ENCODE measurements at regions of chr3 and their contacts with region 1.

Region 1: GRCh38 chr3:90091204-90091924 is 983.9 kb downstream of the EPHA3 start:
- DNase-seq: no peak
- ATAC-seq: peak; percentile 94
- H3K4me3 ChIP-seq: no peak overlapping the region
- H3K27ac ChIP-seq: no peak overlapping the region
- H3K4me1 ChIP-seq: no peaks in the 10 kb centered on the region
- H3K27me3 ChIP-seq: no peaks in the 10 kb centered on the region
- CTCF ChIP-seq: peak; percentile 22 to 49 (median 42); a peak in 4 of 6 replicates
- EP300 ChIP-seq: no peak
- POLR2A ChIP-seq: no peak
- RAD21 ChIP-seq: peak; percentile 60

Region 2: DNA sequence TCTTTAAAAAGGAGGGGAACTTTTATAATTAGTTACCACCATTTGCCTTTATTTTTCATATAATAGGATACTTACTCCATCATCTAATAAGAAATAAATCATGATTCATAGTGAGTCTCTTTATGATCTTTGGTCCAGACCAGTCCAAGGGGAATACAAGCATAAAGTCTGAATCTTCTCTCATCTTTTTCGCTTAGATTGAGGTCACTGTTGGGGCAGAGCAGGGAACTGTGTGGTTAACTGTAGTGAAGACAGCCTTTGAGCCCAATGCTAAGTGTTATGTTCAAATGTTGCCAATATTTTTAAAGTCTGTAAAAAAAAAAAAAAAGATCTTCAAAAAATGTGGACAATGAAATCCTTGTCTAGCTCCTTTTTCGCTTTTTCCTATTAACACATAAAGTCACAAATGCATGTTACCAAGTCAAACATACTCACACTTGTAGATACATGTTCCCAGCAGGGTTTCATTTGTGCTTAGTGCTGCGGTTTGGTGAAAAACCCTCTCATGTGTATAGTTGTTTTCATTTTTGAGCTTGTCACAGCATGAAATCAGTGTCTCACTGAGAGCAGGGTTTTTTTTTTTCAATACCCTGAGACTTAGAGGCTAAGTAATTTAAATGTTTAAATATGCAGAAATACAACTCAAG is 911.9 kb before region 1 on chr3:
- CTCF ChIA-PET with region 1: interaction called, 4 read pairs
- POLR2A ChIA-PET with region 1: no interaction called
- RAD21 ChIA-PET with region 1: interaction called, 14 read pairs
- SMC1A ChIA-PET with region 1: interaction called, 3 read pairs
- in situ Hi-C with region 1: no loop called
- intact Hi-C with region 1: no loop called
- DNase-seq: peak; percentile 16
- ATAC-seq: peak; percentile 93
- H3K4me3 ChIP-seq: no peak overlapping the region
- H3K27ac ChIP-seq: no peak overlapping the region
- H3K4me1 ChIP-seq: no peaks in the 10 kb centered on the region
- H3K27me3 ChIP-seq: no peaks in the 10 kb centered on the region
- CTCF ChIP-seq: no peak
- EP300 ChIP-seq: peak in 1 of 2 experiments; percentile 13; a peak in 1 of 4 replicates
- POLR2A ChIP-seq: no peak
- RAD21 ChIP-seq: no peak

Region 3: DNA sequence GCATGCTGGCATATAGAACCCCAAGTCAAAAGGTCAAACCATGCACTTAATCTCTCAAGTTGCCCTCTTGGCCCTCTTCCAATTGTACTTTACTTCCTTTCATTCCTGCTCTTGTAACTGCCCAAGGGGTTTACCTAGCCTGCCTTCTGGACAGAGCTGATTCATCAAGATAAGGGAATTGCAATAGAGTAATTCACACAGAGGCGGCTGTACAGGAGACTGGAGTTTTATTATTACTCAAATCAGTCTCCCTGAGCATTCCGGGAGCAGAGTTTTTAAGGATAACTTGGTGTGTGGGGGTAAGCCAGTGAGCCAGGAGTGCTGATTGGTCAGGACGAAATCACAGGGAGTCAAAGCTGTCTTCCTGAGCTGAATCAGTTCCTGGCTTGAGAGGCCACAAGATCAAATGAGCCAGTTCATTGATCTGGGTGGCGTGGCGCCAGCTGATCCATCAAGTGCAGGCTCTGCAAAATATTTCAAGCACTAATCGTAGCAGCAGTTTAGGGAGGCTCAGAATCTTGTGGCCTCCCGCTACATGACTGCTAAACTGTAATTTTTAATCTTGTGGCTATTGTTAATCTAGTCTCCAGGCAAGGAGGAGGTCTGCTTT is 394.0 kb before region 1 on chr3:
- CTCF ChIA-PET with region 1: interaction called, 5 read pairs
- POLR2A ChIA-PET with region 1: no interaction called
- RAD21 ChIA-PET with region 1: interaction called, 9 read pairs
- SMC1A ChIA-PET with region 1: interaction called, 13 read pairs
- in situ Hi-C with region 1: no loop called
- intact Hi-C with region 1: loop called (anchors 5 kb)
- DNase-seq: no peak
- ATAC-seq: no peak
- H3K4me3 ChIP-seq: no peak overlapping the region
- H3K27ac ChIP-seq: no peak overlapping the region
- H3K4me1 ChIP-seq: no peaks in the 10 kb centered on the region
- H3K27me3 ChIP-seq: no peaks in the 10 kb centered on the region
- CTCF ChIP-seq: no peak
- EP300 ChIP-seq: no peak
- POLR2A ChIP-seq: no peak
- RAD21 ChIP-seq: no peak

Region 4: DNA sequence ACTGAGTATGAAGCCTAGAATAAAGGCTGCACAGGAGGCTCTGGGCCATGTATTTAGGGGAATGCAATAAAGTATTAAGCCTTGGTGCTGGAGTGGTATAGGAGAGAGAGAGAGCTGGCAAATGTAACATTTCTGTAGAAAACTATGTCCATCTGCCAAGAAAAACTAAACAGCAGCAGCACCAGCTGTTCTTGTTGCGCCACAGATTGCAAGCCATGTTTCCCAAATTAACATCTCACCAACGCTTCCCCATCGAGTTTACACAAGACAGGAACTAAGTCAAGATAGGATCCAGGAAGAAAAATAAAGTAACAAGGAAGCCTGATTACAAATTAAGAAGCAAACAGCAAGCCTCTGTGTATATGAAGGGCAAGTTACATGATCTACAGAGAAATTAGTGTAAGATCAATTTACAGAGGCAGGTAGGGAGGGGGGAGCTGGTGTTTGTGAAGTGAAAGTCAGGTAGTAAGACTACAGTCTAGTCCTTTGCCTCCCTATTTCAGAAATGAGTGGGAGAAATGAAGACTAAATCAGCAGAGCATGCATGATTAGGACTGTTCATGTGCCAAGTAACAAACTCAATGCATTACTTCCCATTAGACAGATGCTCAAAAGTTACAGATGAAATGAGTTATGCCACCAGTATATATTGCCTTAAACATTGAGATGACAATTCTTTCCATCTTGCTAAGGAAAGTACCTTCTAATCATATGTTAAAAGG is 83.4 kb before region 1 on chr3:
- CTCF ChIA-PET with region 1: interaction called, 8 read pairs
- POLR2A ChIA-PET with region 1: no interaction called
- RAD21 ChIA-PET with region 1: interaction called, 15 read pairs
- SMC1A ChIA-PET with region 1: interaction called, 12 read pairs
- in situ Hi-C with region 1: no loop called
- intact Hi-C with region 1: no loop called
- DNase-seq: no peak
- ATAC-seq: peak; percentile 66
- H3K4me3 ChIP-seq: no peak overlapping the region
- H3K27ac ChIP-seq: no peak overlapping the region
- H3K4me1 ChIP-seq: no peaks in the 10 kb centered on the region
- H3K27me3 ChIP-seq: no peaks in the 10 kb centered on the region
- CTCF ChIP-seq: no peak
- EP300 ChIP-seq: no peak
- POLR2A ChIP-seq: no peak
- RAD21 ChIP-seq: no peak

Region 5: GRCh38 chr3:90055666-90056065 is 35.7 kb before region 1 on chr3:
- CTCF ChIA-PET with region 1: interaction called, 31 read pairs
- POLR2A ChIA-PET with region 1: interaction called, 3 read pairs
- RAD21 ChIA-PET with region 1: interaction called, 38 read pairs
- SMC1A ChIA-PET with region 1: interaction called, 105 read pairs
- in situ Hi-C with region 1: no loop called
- intact Hi-C with region 1: no loop called
- DNase-seq: no peak
- ATAC-seq: peak; percentile 12; the same call in 1 of the 3 replicates
- H3K4me3 ChIP-seq: no peak overlapping the region
- H3K27ac ChIP-seq: no peak overlapping the region
- H3K4me1 ChIP-seq: no peaks in the 10 kb centered on the region
- H3K27me3 ChIP-seq: no peaks in the 10 kb centered on the region
- CTCF ChIP-seq: no peak
- EP300 ChIP-seq: no peak
- POLR2A ChIP-seq: no peak
- RAD21 ChIP-seq: no peak

Region 6: DNA sequence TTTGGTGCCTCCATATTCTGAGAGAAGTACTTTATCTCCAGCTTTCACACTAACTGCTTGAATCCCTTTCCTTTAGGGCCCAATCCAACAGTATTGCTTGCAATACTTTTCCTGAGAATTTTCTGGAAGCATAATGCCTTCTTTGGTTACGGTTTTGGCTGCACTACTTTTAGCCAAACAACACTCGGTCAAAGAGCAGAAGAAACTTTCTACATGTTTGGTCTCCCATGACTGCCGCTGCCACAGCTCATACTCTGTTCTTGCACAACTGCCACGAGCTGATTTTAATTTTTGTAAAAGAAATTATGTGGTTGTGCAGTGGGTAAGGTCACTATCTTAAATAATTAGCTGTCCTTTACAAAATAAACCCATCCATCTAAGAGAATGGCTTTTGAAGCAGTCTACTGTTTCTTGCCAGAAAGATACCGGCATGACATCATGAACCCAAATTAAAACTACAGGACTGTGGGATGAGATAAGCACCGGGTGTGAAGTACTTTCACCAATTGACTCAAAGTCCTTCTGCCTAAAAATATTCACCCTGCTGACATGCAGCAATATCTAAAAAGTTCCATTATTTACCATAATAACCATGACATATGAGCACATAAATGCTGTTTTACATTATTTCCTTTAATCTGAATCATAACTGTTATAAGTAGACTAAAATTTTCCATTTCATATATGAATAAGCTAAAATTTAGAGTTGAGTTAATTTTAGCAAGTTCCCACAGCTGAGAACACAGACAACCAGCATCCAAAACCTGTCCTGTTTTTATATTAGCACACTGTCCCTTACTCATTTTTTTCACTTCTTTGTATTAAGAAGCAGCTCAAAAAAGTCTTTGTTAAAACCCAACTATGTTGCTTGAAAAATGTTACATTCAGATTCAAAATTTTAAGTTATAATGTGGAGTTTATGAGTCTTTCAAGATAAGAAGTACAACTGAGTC is 170.4 kb after region 1 on chr3:
- CTCF ChIA-PET with region 1: no interaction called
- POLR2A ChIA-PET with region 1: no interaction called
- RAD21 ChIA-PET with region 1: no interaction called
- SMC1A ChIA-PET with region 1: no interaction called
- in situ Hi-C with region 1: no loop called
- intact Hi-C with region 1: no loop called
- DNase-seq: no peak
- ATAC-seq: no peak
- H3K4me3 ChIP-seq: no peak overlapping the region
- H3K27ac ChIP-seq: no peak overlapping the region
- H3K4me1 ChIP-seq: no peaks in the 10 kb centered on the region
- H3K27me3 ChIP-seq: no peaks in the 10 kb centered on the region
- CTCF ChIP-seq: no peak
- EP300 ChIP-seq: no peak
- POLR2A ChIP-seq: no peak
- RAD21 ChIP-seq: no peak